Naive thymus-derived CD4-positive, alpha-beta T cell (primary cell): ENCODE measurements at regions of chr1 and their contacts with region 1.

Region 1: GRCh38 chr1:160681067-160681890 is 30.3 kb downstream of the CD48 start:
- DNase-seq: peak; percentile 77 to 90 (median 87)
- ATAC-seq: peak; percentile 98
- H3K4me3 ChIP-seq: no peak overlapping the region
- H3K4me3 Mint-ChIP-seq: peak overlapping the region in 3 of 10 donors; percentile 1 to 70 (median 68)
- H3K27ac ChIP-seq: peak overlapping the region; percentile 65
- H3K27ac Mint-ChIP-seq: peak overlapping the region; percentile 76 to 96 (median 90)
- H3K4me1 ChIP-seq: peaks cover 47% of the 10 kb centered on the region in 2 donors
- H3K4me1 Mint-ChIP-seq: peaks cover 51 to 91% (median 52%) of the 10 kb centered on the region in 7 donors
- H3K27me3 ChIP-seq: no peaks in the 10 kb centered on the region
- H3K27me3 Mint-ChIP-seq: no peaks in the 10 kb centered on the region

Region 2: DNA sequence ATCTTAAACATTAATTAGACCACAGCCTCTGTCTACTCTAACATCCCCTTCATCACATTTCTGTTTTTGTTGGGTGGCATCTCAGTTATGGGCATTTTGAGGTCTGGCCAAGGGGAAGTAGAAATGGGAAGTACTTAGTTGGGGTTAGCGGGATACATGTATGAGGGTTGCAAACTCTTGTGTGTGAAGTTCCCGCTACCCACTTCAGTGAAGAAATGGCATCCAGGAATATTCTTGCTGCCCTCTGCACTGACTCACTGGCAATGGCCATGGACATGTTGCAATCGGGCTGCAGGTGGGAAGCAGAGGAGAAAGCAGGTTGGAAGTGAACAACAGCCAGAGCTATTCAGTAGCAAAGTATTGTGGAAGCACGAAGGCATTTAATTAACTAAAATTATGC is 23.0 kb after region 1 on chr1:
- CTCF ChIA-PET with region 1: interaction called, 19 read pairs
- POLR2A ChIA-PET with region 1: interaction called, 18 read pairs
- intact Hi-C with region 1: loop called in 1 of 2 experiments (anchors 1 kb)
- DNase-seq: no peak
- ATAC-seq: peak; percentile 54
- H3K4me3 ChIP-seq: peak overlapping the region; percentile 7
- H3K4me3 Mint-ChIP-seq: peak overlapping the region in 4 of 10 donors; percentile 43 to 69 (median 67)
- H3K27ac ChIP-seq: peak overlapping the region; percentile 99
- H3K27ac Mint-ChIP-seq: peak overlapping the region in 5 of 9 donors; percentile 19 to 86 (median 81)
- H3K4me1 ChIP-seq: peaks cover 69 to 79% of the 10 kb centered on the region in 2 donors
- H3K4me1 Mint-ChIP-seq: peaks cover 2 to 66% (median 51%) of the 10 kb centered on the region in 7 donors
- H3K27me3 ChIP-seq: no peaks in the 10 kb centered on the region
- H3K27me3 Mint-ChIP-seq: no peaks in the 10 kb centered on the region

Region 3: GRCh38 chr1:160726498-160727315 is 45.4 kb after region 1 on chr1:
- CTCF ChIA-PET with region 1: interaction called, 20 read pairs
- POLR2A ChIA-PET with region 1: interaction called, 3 read pairs
- intact Hi-C with region 1: loop called (anchors 1 kb)
- DNase-seq: peak in 8 of 9 donors; percentile 57 to 80 (median 73)
- ATAC-seq: peak; percentile 97
- H3K4me3 ChIP-seq: no peak overlapping the region
- H3K4me3 Mint-ChIP-seq: no peak overlapping the region
- H3K27ac ChIP-seq: no peak overlapping the region
- H3K27ac Mint-ChIP-seq: no peak overlapping the region
- H3K4me1 ChIP-seq: peaks cover 15 to 21% of the 10 kb centered on the region in 2 donors
- H3K4me1 Mint-ChIP-seq: peaks cover 12 to 29% (median 16%) of the 10 kb centered on the region in 7 donors
- H3K27me3 ChIP-seq: no peaks in the 10 kb centered on the region
- H3K27me3 Mint-ChIP-seq: no peaks in the 10 kb centered on the region

Region 4: GRCh38 chr1:160830321-160831153 is 149.3 kb after region 1 on chr1:
- CTCF ChIA-PET with region 1: interaction called, 6 read pairs
- POLR2A ChIA-PET with region 1: no interaction called
- intact Hi-C with region 1: loop called (anchors 1 kb)
- DNase-seq: peak; percentile 51 to 77 (median 67)
- ATAC-seq: peak; percentile 75
- H3K4me3 ChIP-seq: no peak overlapping the region
- H3K4me3 Mint-ChIP-seq: no peak overlapping the region
- H3K27ac ChIP-seq: peak overlapping the region; percentile 10
- H3K27ac Mint-ChIP-seq: peak overlapping the region in 8 of 9 donors; percentile 68 to 96 (median 86)
- H3K4me1 ChIP-seq: peaks cover 6 to 18% of the 10 kb centered on the region in 2 donors
- H3K4me1 Mint-ChIP-seq: peaks cover 20 to 54% (median 36%) of the 10 kb centered on the region in 7 donors
- H3K27me3 ChIP-seq: no peaks in the 10 kb centered on the region
- H3K27me3 Mint-ChIP-seq: no peaks in the 10 kb centered on the region

Region 5: GRCh38 chr1:160884579-160884978 is 203.3 kb after region 1 on chr1:
- CTCF ChIA-PET with region 1: interaction called, 5 read pairs
- POLR2A ChIA-PET with region 1: no interaction called
- intact Hi-C with region 1: loop called in 1 of 2 experiments (anchors 1 kb)
- DNase-seq: peak in 2 of 9 donors; percentile 32
- ATAC-seq: no peak
- H3K4me3 ChIP-seq: no peak overlapping the region
- H3K4me3 Mint-ChIP-seq: no peak overlapping the region
- H3K27ac ChIP-seq: no peak overlapping the region
- H3K27ac Mint-ChIP-seq: no peak overlapping the region
- H3K4me1 ChIP-seq: no peaks in the 10 kb centered on the region
- H3K4me1 Mint-ChIP-seq: peaks cover 0 to 10% (median 0%) of the 10 kb centered on the region in 7 donors
- H3K27me3 ChIP-seq: no peaks in the 10 kb centered on the region
- H3K27me3 Mint-ChIP-seq: peaks cover 0 to 6% (median 0%) of the 10 kb centered on the region in 5 donors